Activated CD4-positive, alpha-beta T cell treated with anti-CD3 and anti-CD28 coated beads, Interleukin-2, amount 10 ng/mL, durations not matched to agents 24 days and 14 days (primary cell): ENCODE measurements at regions of chr6 and their contacts with region 1.

Region 1: GRCh38 chr6:122839477-122839876 is 50.4 kb downstream of the SMPDL3A start:
- DNase-seq: peak; percentile 87
- H3K4me3 Mint-ChIP-seq: no peak overlapping the region
- H3K27ac Mint-ChIP-seq: no peak overlapping the region
- H3K4me1 Mint-ChIP-seq: no peaks in the 10 kb centered on the region
- H3K27me3 Mint-ChIP-seq: peaks cover 5% of the 10 kb centered on the region

Region 2: DNA sequence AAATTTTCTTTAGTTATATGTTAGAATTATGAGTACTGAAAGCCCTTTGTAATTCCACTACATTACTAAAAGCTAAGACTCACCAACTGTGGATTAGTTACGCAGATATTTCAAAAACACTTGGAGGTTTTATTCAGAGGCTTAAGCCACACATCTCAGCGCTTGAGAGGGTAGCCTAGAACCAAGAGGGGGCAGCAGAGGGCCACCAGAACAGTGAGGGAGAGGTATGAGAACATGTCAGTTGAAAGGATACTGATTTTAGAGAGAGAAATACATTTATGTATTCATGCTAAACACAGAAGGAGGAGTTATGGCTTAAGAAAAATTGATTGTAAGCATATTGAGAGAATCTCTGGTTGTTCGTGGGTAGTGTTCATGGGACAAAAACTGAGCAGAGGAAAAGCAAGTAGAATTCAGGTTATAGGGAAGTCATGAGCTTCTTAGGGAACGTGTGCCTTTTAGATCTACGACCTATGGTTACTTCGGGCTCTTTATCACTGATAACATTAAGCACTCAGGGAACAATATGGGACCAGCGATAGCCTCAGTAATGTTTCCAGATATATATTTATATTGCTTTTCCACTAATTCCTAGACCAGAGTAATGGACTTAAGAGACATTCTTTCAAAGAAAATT is 347.4 kb before region 1 on chr6:
- intact Hi-C with region 1: loop called (anchors 5 kb)
- DNase-seq: peak; percentile 91
- H3K4me3 Mint-ChIP-seq: no peak overlapping the region
- H3K27ac Mint-ChIP-seq: no peak overlapping the region
- H3K4me1 Mint-ChIP-seq: peaks cover 9% of the 10 kb centered on the region
- H3K27me3 Mint-ChIP-seq: no peaks in the 10 kb centered on the region

Region 3: GRCh38 chr6:122730775-122731386 is 108.6 kb before region 1 on chr6:
- intact Hi-C with region 1: loop called (anchors 1 kb)
- DNase-seq: peak; percentile 61
- H3K4me3 Mint-ChIP-seq: no peak overlapping the region
- H3K27ac Mint-ChIP-seq: no peak overlapping the region
- H3K4me1 Mint-ChIP-seq: no peaks in the 10 kb centered on the region
- H3K27me3 Mint-ChIP-seq: peaks cover 19% of the 10 kb centered on the region

Region 4: GRCh38 chr6:122789182-122790027 is 50.1 kb before region 1 on chr6 and contains the start of gene SMPDL3A:
- intact Hi-C with region 1: loop called (anchors 2 kb)
- DNase-seq: peak; percentile 74
- H3K4me3 Mint-ChIP-seq: peak within 1 kb of the TSS; percentile 91
- H3K27ac Mint-ChIP-seq: peak within 1 kb of the TSS; percentile 84
- H3K4me1 Mint-ChIP-seq: peaks cover 19% of the 10 kb centered on the region
- H3K27me3 Mint-ChIP-seq: peaks cover 64% of the 10 kb centered on the region
- total RNA-seq, gene SMPDL3A: 0.28 and 0.42 TPM in 2 replicates

Region 5: GRCh38 chr6:122818866-122819265 is 20.6 kb before region 1 on chr6:
- intact Hi-C with region 1: no loop called
- DNase-seq: no peak
- H3K4me3 Mint-ChIP-seq: no peak overlapping the region
- H3K27ac Mint-ChIP-seq: no peak overlapping the region
- H3K4me1 Mint-ChIP-seq: no peaks in the 10 kb centered on the region
- H3K27me3 Mint-ChIP-seq: peaks cover 5% of the 10 kb centered on the region